ENCODE measurements at regions of chr6 and their contacts with region 1.

Region 1: GRCh38 chr6:3251462-3252314 is 7.1 kb upstream of the PSMG4 start:
- DNase-seq: peak; percentile 42
- H3K4me3 ChIP-seq: no peak overlapping the region
- H3K27ac ChIP-seq: no peak overlapping the region
- H3K27me3 ChIP-seq: peaks cover 12% of the 10 kb centered on the region
- CTCF ChIP-seq: peak; percentile 99

Region 2: GRCh38 chr6:3119040-3119723 is 132.5 kb before region 1 on chr6:
- CTCF ChIA-PET with region 1: interaction called, 19 read pairs
- POLR2A ChIA-PET with region 1: no interaction called
- DNase-seq: no peak
- H3K4me3 ChIP-seq: peak overlapping the region; percentile 89
- H3K27ac ChIP-seq: peak overlapping the region; percentile 21
- H3K27me3 ChIP-seq: no peaks in the 10 kb centered on the region
- CTCF ChIP-seq: no peak

Region 3: GRCh38 chr6:3125815-3126214 is 125.9 kb before region 1 on chr6:
- CTCF ChIA-PET with region 1: interaction called, 119 read pairs
- POLR2A ChIA-PET with region 1: no interaction called
- DNase-seq: no peak
- H3K4me3 ChIP-seq: no peak overlapping the region
- H3K27ac ChIP-seq: no peak overlapping the region
- H3K27me3 ChIP-seq: no peaks in the 10 kb centered on the region
- CTCF ChIP-seq: no peak

Region 4: GRCh38 chr6:3157131-3157927 is 94.4 kb before region 1 on chr6 and contains the start of gene TUBB2A:
- CTCF ChIA-PET with region 1: interaction called, 24 read pairs
- POLR2A ChIA-PET with region 1: interaction called, 16 read pairs
- DNase-seq: peak; percentile 38
- H3K4me3 ChIP-seq: peak within 1 kb of the TSS; percentile 85
- H3K27ac ChIP-seq: peak within 1 kb of the TSS; percentile 52
- H3K27me3 ChIP-seq: no peaks in the 10 kb centered on the region
- CTCF ChIP-seq: peak; percentile 35
- polyA plus RNA-seq, gene TUBB2A: 111 and 138 TPM in 2 replicates

Region 5: GRCh38 chr6:3162565-3163247 is 89.0 kb before region 1 on chr6:
- CTCF ChIA-PET with region 1: interaction called, 24 read pairs
- POLR2A ChIA-PET with region 1: interaction called, 16 read pairs
- DNase-seq: no peak
- H3K4me3 ChIP-seq: peak overlapping the region; percentile 71
- H3K27ac ChIP-seq: peak overlapping the region; percentile 61
- H3K27me3 ChIP-seq: no peaks in the 10 kb centered on the region
- CTCF ChIP-seq: peak; percentile 20; the same call in 1 of the 2 replicates

Region 6: GRCh38 chr6:3231247-3232016 is 20.3 kb before region 1 on chr6:
- CTCF ChIA-PET with region 1: interaction called, 12 read pairs
- POLR2A ChIA-PET with region 1: interaction called, 10 read pairs
- DNase-seq: peak; percentile 10
- H3K4me3 ChIP-seq: peak overlapping the region; percentile 65
- H3K27ac ChIP-seq: peak overlapping the region; percentile 31
- H3K27me3 ChIP-seq: peaks cover 89% of the 10 kb centered on the region
- CTCF ChIP-seq: no peak

Region 7: GRCh38 chr6:3237761-3238662 is 13.7 kb before region 1 on chr6:
- CTCF ChIA-PET with region 1: interaction called, 12 read pairs
- POLR2A ChIA-PET with region 1: interaction called, 9 read pairs
- DNase-seq: no peak
- H3K4me3 ChIP-seq: no peak overlapping the region
- H3K27ac ChIP-seq: no peak overlapping the region
- H3K27me3 ChIP-seq: peaks cover 43% of the 10 kb centered on the region
- CTCF ChIP-seq: peak; percentile 24; the same call in 1 of the 2 replicates

Region 8: DNA sequence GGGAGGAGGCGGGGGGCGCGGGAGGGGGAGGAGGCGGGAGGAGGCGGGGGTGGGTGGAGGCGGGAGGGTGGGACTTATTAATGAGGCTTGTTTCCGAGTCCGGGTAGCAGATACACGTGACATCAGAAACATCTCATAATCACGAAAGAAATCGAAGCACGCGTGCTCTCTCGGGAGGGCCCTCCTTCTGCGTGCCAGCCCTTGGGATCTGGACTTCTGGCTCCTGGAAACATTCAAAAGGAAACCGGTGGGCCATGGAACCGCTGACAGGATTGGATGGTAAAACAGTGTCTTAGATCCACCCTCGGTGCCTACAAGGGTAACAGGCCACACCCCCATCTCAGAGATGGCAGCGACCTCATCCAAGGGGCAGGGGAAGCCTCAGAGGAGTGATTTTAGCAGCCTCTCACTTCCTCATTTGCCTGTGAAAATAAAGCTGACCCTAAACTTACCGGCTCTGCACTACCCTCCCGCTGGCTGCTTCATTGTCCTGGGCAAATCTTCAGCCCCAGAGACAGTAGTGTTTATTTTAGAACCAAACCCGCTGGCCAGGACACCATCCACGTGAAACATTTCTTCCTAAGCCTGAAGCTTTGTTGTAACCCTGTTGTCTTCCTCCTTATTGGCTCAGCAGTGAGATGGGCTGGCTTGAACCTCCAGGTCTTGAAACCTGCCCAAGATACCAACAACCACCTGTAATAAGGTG is 104.5 kb after region 1 on chr6:
- CTCF ChIA-PET with region 1: no interaction called
- POLR2A ChIA-PET with region 1: no interaction called
- DNase-seq: no peak
- H3K4me3 ChIP-seq: peak overlapping the region; percentile 50
- H3K27ac ChIP-seq: no peak overlapping the region
- H3K27me3 ChIP-seq: peaks cover 23% of the 10 kb centered on the region
- CTCF ChIP-seq: no peak

Measured in AG04450 (cell line).